Upper lobe of right lung (tissue), 1 donor: ENCODE measurements at regions of chr12 and their contacts with region 1.

Region 1: DNA sequence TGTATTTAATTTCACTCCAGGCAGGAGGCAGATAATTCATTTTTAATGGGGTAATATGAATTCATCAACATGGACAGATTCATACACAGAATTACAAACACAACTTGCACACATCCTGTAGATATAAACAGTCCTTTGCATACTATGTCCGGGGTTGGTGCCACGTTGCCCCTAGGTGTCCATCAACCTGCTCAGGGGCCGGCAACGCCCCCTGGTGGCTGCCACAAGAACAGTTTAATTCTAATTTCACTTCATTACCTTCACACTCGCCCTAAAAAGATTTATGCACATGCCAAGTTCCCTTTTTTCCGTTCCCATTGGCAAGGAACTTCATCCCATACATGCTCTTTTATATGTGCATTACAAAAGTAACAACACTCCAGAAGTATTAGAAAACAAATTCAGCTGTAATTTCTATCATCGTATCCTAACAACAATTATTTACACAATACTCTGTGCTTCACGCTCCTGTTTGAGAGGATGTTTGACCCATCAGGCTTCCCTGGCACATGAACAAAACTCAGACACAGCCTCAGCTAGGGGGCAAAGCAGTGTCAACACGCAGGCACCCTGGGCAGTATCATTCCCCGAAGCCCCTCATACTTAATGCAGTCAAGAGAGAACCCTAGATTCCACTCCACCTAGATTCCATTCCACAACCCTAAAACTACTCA is 15.5 kb downstream of the MANSC1 start:
- DNase-seq: peak; percentile 80
- ATAC-seq: peak; percentile 83
- H3K4me3 ChIP-seq: no peak overlapping the region
- H3K27ac ChIP-seq: no peak overlapping the region
- H3K4me1 ChIP-seq: peaks cover 22% of the 10 kb centered on the region
- H3K27me3 ChIP-seq: no peaks in the 10 kb centered on the region
- CTCF ChIP-seq: peak; percentile 86

Region 2: GRCh38 chr12:12081836-12082497 is 252.5 kb before region 1 on chr12:
- intact Hi-C with region 1: loop called (anchors 10 kb)
- DNase-seq: no peak
- ATAC-seq: peak; percentile 70
- H3K4me3 ChIP-seq: no peak overlapping the region
- H3K27ac ChIP-seq: peak overlapping the region; percentile 55
- H3K4me1 ChIP-seq: peaks cover 12% of the 10 kb centered on the region
- H3K27me3 ChIP-seq: no peaks in the 10 kb centered on the region
- CTCF ChIP-seq: peak; percentile 41

Region 3: GRCh38 chr12:12171991-12172521 is 162.4 kb before region 1 on chr12:
- intact Hi-C with region 1: no loop called
- DNase-seq: no peak
- ATAC-seq: no peak
- H3K4me3 ChIP-seq: no peak overlapping the region
- H3K27ac ChIP-seq: no peak overlapping the region
- H3K4me1 ChIP-seq: no peaks in the 10 kb centered on the region
- H3K27me3 ChIP-seq: no peaks in the 10 kb centered on the region
- CTCF ChIP-seq: no peak